ENCODE measurements at regions of chr11 and their contacts with region 1.

Region 1: DNA sequence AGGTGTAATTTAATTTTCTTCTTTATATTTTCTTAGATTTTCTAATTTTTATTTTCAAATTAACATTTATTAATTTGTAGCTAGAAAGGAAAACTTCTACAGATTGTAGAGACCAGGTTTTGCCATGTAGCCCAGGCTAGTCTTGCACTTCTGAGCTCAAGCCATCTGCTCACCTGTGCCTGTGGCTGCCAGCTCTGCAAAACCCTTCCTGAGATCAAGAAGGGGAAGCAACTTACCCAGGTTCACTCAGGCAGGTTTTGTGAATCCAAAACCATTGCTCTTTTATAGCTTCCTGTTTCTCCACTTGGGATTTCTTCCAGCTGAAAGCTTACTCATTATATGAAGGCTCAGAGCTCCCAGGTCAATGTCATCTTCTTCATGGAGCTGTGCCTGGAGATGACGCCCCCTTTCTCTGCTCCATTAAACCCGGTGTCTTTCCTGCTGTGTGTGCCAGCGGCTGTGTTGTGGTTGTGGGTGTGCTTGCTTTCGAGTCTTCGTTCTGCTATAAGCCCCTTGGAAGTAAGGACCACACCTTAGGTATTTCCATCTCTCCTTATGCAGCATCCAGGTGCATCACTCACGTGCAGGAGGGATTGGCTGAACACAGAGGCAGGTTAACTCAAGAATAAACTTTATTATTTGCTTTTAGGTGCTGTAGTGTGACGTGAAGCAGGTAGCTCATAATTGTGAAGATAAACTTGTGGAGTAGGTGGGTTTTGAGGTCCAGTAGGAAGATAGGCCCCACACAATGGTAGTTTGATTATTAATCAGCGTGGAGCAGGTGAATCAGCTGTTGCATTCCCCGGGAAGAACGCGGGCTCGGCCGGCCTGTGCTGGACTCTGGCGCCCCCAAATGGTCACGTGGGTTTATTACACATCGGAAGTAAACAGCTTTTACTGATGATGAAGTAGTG is 42.2 kb upstream of the INCENP start:
- DNase-seq: peak; percentile 80

Region 2: GRCh38 chr11:61392981-61393595 is 688.5 kb before region 1 on chr11:
- CTCF ChIA-PET with region 1: no interaction called
- POLR2A ChIA-PET with region 1: no interaction called
- DNase-seq: peak; percentile 42

Region 3: DNA sequence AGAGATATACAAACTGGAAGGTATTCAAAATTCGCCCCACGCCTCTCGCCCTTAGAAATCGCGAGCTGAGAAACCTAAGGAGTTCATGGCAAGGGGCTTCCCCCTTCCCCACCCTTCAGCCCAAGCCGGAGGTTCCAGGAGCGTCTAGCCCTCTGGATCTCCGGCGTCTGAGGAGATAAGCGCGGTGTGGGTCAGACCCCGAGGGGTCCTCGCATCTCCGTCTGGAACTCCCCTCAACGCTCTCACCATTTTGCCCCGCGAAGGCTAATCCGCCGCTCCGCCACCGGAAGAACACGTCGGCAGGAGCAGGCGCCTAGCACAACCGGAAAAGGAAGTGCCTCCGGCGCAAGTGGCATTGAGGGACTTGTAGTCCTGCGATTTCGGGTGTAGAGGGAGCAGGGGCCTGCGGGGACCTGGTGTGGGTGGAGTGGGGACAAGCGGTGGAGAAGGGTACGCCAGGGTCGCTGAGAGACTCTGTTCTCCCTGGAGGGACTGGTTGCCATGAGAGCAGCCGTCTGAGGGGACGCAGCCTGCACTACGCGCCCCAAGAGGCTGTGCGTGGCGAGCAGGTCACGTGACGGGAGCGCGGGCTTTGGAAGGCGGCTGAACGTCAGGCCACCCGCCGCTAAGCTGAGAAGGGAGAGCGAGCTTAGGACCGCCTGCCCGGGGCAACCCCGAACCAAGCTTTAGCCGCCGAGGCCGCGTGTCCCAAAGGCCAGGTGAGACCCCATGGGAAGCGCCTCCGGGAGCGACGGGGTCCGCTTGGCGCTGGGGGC is 289.1 kb before region 1 on chr11 and contains the starts of genes FEN1 and TMEM258:
- CTCF ChIA-PET with region 1: interaction called, 14 read pairs
- POLR2A ChIA-PET with region 1: no interaction called
- DNase-seq: peak; percentile 90

Region 4: DNA sequence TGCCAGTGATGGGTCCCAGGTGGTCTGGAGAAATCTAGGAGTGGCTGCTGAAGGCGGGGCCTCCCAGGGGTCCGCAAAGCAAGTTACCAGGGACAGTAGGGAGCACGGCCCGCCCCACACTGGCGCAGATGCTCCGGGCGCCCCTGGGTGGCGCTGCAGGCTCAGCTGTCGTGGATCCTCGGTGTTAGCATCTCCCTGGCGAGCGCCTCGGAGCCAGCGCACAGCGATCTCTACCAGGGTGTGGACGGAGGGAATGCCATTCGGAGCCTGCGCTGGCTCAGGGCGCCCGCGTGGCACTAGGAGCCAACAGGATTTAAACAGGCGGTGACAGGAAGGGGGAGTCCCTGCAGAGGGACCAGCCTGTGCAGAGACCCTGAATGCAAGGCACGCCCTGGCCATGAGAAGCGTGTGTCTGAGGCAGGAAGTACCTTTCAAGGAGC is 210.5 kb before region 1 on chr11:
- CTCF ChIA-PET with region 1: interaction called, 17 read pairs
- POLR2A ChIA-PET with region 1: no interaction called
- DNase-seq: peak; percentile 91

Region 5: DNA sequence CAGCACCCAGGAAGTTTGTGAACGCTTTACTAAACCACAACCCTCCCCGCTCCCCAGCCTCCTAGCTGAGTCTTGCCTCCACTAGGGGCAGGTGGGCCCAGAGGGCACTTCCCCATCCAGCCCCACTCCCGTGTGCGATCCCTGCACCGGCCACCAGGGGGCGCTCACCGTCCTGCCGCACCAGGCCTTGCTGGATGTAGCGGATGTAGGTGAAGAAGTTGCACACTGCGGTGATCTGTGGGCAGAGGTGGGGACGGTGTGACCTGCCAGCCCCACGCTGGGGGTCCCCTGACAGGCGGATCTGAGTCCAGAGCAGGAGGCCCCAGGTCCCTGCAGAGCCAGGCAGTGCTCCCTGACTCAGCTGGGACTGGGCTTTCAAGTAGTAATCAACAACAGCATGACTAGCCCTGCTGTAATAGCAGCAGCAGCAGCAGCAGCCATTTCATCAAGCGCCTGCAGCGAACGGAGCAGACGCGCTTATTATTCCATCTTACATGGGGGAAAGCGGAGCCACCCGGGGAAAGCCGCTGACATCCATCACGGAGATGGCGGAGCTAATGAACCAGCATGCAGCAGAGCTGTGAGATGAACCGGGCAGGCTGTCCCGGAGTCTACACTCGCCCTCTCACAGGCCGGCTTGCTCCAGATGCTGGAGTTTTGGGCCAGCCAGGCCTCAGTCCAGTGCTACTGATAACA is 182.3 kb before region 1 on chr11:
- CTCF ChIA-PET with region 1: interaction called, 73 read pairs
- POLR2A ChIA-PET with region 1: interaction called, 3 read pairs
- DNase-seq: peak; percentile 95

Region 6: GRCh38 chr11:61947486-61948210 is 134.0 kb before region 1 on chr11:
- CTCF ChIA-PET with region 1: interaction called, 26 read pairs
- POLR2A ChIA-PET with region 1: interaction called, 6 read pairs
- DNase-seq: peak; percentile 87

Region 7: GRCh38 chr11:62069986-62070919 is 11.4 kb before region 1 on chr11:
- CTCF ChIA-PET with region 1: interaction called, 12 read pairs
- POLR2A ChIA-PET with region 1: no interaction called
- DNase-seq: no peak

Region 8: DNA sequence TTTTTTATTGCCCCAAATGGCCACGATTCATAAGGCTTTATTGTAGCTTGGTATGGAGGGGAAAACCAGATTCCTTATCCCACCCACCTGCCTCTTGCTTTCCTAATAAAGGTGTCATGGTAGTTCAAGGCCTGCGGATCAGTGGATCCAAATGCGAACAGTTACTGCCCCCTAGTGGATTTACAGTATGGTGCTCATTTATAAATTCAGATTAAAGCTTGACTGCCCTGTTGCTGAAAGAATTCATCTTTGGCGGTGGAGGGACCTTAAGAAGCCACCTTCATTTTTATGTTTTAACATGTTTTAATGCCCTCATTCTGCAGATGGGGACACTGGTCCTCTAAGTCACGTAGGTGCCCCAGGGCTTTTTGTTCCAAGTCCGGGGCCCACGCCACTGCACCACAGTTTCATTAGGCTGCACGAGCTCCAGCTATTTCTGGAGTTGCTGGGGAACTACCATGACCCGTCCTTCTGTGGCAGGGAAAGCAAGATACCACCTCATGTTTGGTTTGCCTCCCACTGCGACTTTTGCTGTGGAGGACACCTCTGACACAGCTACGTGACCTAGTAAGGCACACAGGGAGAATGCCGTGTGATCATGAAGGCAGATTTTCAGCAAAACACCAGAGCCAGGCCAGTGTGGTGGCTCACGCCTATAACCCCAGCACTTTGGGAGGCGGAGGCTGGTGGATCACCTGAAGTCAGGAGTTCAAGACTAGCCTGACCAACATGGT is 26.5 kb after region 1 on chr11:
- CTCF ChIA-PET with region 1: interaction called, 31 read pairs
- POLR2A ChIA-PET with region 1: no interaction called
- DNase-seq: peak; percentile 60